ENCODE measurements at regions of chr11 and their contacts with region 1.

Region 1: GRCh38 chr11:67353317-67354074 is at the start of gene POLD4:
- DNase-seq: peak; percentile 99 to 100 (median 99)
- ATAC-seq: peak; percentile 89 to 96 (median 93)
- H3K4me3 ChIP-seq: peak within 1 kb of the TSS; percentile 49 to 97 (median 74)
- H3K27ac ChIP-seq: peak within 1 kb of the TSS; percentile 92 to 100 (median 99)
- H3K4me1 ChIP-seq: peaks cover 8 to 83% (median 63%) of the 10 kb centered on the region in 12 donors
- H3K27me3 ChIP-seq: no peaks in the 10 kb centered on the region
- CTCF ChIP-seq: peak in 1 of 12 donors; percentile 5
- POLR2A ChIP-seq: peak in 1 of 2 donors; percentile 84
- total RNA-seq, gene POLD4: 36.0 to 131 (median 57.1) TPM

Region 2: GRCh38 chr11:67373925-67374618 is 20.6 kb after region 1 on chr11:
- intact Hi-C with region 1: loop called in 3 of 10 experiments (anchors 2 kb)
- DNase-seq: peak; percentile 73 to 90 (median 77)
- ATAC-seq: peak; percentile 29 to 71 (median 66)
- H3K4me3 ChIP-seq: peak overlapping the region; percentile 57 to 88 (median 78)
- H3K27ac ChIP-seq: peak overlapping the region in 11 of 12 donors; percentile 51 to 97 (median 87)
- H3K4me1 ChIP-seq: peaks cover 0 to 51% (median 23%) of the 10 kb centered on the region in 12 donors
- H3K27me3 ChIP-seq: peaks cover 0 to 6% (median 0%) of the 10 kb centered on the region in 9 donors
- CTCF ChIP-seq: peak; percentile 22 to 61 (median 42)
- POLR2A ChIP-seq: peak in 1 of 2 donors; percentile 40

Region 3: DNA sequence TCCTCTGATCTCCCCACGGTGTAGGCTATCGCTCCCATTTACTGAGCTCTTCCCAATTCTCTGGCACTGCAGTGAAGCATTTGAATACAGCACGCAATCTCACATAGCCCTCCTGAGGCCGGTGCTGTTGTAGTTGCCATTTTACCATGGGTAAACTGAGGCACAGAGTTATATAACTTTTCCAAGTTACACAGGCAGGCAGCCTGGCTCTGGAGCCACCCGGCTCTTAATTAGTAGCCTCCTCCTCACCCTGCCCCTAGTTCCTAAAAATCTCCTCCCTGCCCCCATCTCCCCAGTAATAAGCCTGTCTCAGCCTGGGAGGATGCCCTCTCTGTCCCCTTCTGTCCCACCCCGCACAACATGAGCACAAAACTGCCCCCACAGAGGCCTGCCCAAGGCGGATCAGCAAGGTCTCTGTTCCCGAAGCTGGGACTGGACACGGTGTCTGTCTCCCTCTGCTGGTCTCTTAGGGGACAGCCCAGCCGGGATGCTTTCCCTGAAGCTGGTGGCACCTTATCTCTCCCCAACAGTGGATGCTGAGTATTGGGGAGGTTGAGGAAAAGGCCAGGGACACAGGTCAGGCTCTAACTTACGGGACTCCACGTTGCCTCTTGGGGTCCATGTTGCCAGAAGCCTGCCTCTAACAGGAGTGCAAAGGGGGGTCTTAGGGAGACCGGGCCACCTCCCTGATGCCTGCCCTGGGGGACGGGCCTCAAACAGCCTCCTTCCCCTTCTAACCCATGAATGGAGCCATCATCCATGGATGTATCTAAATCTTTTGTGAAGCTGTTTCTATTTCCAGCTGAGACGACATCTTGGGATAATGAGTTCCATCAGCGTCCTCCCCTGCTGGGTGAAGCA is 29.0 kb after region 1 on chr11:
- intact Hi-C with region 1: loop called (anchors 1 to 5 kb)
- DNase-seq: peak; percentile 76 to 87 (median 80)
- ATAC-seq: peak; percentile 72 to 88 (median 88)
- H3K4me3 ChIP-seq: no peak overlapping the region
- H3K27ac ChIP-seq: no peak overlapping the region
- H3K4me1 ChIP-seq: peaks cover 0 to 27% (median 5%) of the 10 kb centered on the region in 12 donors
- H3K27me3 ChIP-seq: no peaks in the 10 kb centered on the region
- CTCF ChIP-seq: peak; percentile 92 to 99 (median 96)
- POLR2A ChIP-seq: no peak